Cardiac septum (tissue), 1 donor: ENCODE measurements at regions of chr1 and their contacts with region 1.

Region 1: DNA sequence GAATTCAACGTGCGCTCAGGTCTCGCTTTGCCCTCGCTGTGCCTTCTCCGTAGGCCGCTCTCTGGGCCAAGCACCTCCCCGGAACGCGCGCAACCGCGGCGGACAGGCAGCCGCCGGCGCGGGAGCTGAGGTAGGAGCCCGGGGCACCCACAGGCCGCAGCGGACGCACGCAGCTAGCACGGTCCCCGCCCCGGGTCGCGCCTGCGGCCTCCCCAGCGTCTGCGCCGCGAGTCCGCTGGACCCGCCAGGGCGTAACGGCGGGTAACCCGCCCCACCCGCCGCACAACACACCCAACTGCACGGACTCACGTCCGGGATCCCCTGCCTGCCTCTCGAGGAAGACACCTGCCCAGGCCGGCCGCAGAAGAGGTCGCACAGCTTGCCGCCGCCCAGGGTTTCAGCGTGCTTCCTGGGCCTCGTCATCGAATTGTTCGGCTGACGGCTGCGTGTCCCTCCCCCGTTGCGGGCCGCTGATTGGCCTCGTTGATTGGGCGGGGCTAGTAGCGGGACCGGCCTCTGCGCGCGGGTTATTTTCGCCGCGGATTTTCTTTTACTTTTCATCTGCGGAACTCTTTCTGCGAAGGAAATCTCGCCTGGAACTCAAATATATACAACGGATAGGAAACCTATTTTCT is at the start of gene CLCC1:
- DNase-seq: peak; percentile 97
- total RNA-seq, gene CLCC1: 24.7 TPM

Region 2: DNA sequence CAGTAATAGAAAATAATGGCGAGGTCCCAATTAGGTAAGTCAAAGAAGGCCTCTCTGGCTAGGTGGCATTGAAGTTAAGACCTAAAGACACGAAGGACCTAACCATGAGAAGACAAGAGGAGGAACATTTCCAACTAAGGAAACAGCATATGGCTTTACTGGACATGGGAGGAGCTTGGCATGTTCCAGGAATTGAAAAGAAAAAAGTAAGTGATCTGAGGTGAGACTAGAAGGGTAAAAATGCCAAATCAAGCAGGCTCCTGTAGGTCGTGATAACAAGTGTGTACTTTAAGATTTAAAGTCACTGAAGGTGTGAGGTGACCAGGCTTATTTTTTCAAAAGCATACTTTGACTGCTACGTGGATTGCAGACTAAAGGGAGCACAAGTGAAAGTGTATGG is 13.5 kb after region 1 on chr1:
- intact Hi-C with region 1: no loop called
- DNase-seq: no peak

Region 3: GRCh38 chr1:109041621-109042468 is 78.7 kb after region 1 on chr1 and contains the start of gene WDR47:
- intact Hi-C with region 1: loop called (anchors 2 kb)
- DNase-seq: peak; percentile 99
- total RNA-seq, gene WDR47: 15.7 TPM

Region 4: DNA sequence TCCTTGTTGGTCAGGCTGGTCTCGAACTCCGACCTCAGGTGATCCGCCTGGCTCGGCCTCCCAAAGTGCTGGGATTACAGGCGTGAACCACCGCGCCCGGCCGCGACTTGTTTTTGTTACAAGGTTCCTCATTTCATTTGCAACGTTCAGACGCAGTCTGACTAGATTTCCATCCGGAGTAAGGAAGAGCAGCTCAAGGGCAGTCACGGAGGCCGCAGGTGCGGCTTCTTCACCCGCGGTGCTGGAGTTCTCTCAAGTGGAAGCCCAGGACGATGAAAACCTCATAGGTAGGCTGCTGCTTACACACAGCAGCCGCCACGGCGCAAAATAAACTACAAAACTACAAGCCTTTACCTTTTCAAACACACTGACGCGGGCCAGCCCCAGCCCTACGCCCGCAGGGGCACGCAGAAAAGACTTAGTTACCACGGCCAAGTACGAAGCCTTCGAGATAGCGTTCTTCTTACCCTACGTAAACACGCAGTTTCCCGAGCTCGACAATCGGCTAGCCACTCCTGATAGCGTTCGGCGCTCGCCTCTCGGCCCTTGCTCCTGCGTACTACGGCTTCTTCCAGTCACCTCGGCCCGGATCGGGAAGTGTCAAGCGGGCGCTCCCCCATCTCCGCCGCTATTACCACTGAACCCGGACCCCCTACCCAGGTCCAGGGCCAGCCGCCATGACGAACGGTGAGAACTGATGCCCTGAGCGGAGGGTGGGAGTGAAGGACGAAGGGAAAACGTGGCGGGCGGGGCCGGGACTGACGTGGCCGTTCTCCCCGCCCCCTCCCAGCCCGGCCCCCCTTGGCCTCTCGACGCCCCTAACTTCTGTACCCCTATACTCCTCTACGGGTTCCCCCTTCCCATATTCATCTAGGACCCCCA is 127.3 kb after region 1 on chr1 and contains the start of gene TMEM167B:
- intact Hi-C with region 1: loop called (anchors 5 kb)
- DNase-seq: peak; percentile 97
- total RNA-seq, gene TMEM167B: 37.4 TPM

Region 5: DNA sequence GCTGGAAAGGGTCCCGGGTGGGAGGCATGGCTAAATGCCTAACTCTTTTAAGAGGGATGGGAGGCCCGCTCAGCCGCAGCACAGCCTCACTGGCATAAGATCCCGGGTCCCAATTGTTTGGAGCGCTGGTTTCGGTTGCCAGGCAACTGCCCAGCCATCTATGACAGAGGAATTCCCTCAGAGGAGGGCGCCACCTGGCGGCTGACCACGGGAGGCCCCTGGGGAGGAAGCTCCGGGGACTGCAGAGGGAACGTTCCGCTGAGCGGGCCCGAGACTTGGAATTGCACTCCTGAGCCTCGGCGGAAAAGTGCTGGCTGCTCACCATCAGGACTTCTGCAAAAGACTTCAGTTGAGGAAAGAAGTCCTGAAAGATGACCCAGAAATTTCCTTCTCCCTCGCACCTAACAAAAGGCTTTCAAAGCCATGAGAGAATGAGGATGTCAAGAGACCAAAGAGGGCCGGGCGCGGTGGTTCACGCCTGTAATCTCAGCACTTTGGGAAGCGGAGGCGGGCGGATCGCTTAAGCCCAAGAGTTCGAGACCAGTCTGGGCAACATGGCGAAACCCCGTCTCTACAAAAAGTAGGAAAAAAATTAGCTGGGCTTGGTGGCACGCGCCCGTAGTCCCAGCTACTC is 149.6 kb after region 1 on chr1:
- intact Hi-C with region 1: loop called (anchors 5 kb)
- DNase-seq: peak; percentile 96